T-cell (primary cell): ENCODE measurements at regions of chr6 and their contacts with region 1.

Region 1: GRCh38 chr6:157314705-157315321 is 8.5 kb downstream of the TMEM242 start:
- DNase-seq: peak in 11 of 35 experiments; percentile 4 to 76 (median 13)
- ATAC-seq: peak; percentile 79 to 96 (median 84)
- H3K4me3 ChIP-seq: no peak overlapping the region
- H3K4me3 Mint-ChIP-seq: no peak overlapping the region
- H3K27ac ChIP-seq: no peak overlapping the region
- H3K27ac Mint-ChIP-seq: peak overlapping the region in 1 of 2 donors; percentile 40
- H3K4me1 ChIP-seq: peaks cover 2% of the 10 kb centered on the region in 2 experiments
- H3K4me1 Mint-ChIP-seq: peaks cover 2 to 11% (median 6%) of the 10 kb centered on the region in 3 donors
- H3K27me3 ChIP-seq: no peaks in the 10 kb centered on the region
- H3K27me3 Mint-ChIP-seq: no peaks in the 10 kb centered on the region

Region 2: GRCh38 chr6:156866220-156867015 is 448.4 kb before region 1 on chr6:
- CTCF ChIA-PET with region 1: no interaction called
- POLR2A ChIA-PET with region 1: no interaction called
- DNase-seq: peak in 4 of 35 experiments; percentile 8 to 37 (median 29)
- ATAC-seq: peak; percentile 51 to 79 (median 62)
- H3K4me3 ChIP-seq: no peak overlapping the region
- H3K4me3 Mint-ChIP-seq: peak overlapping the region in 2 of 3 donors; percentile 7 to 36
- H3K27ac ChIP-seq: no peak overlapping the region
- H3K27ac Mint-ChIP-seq: peak overlapping the region; percentile 25 to 43
- H3K4me1 ChIP-seq: peaks cover 9 to 30% of the 10 kb centered on the region in 2 experiments
- H3K4me1 Mint-ChIP-seq: peaks cover 81 to 93% (median 89%) of the 10 kb centered on the region in 3 donors
- H3K27me3 ChIP-seq: no peaks in the 10 kb centered on the region
- H3K27me3 Mint-ChIP-seq: no peaks in the 10 kb centered on the region

Region 3: DNA sequence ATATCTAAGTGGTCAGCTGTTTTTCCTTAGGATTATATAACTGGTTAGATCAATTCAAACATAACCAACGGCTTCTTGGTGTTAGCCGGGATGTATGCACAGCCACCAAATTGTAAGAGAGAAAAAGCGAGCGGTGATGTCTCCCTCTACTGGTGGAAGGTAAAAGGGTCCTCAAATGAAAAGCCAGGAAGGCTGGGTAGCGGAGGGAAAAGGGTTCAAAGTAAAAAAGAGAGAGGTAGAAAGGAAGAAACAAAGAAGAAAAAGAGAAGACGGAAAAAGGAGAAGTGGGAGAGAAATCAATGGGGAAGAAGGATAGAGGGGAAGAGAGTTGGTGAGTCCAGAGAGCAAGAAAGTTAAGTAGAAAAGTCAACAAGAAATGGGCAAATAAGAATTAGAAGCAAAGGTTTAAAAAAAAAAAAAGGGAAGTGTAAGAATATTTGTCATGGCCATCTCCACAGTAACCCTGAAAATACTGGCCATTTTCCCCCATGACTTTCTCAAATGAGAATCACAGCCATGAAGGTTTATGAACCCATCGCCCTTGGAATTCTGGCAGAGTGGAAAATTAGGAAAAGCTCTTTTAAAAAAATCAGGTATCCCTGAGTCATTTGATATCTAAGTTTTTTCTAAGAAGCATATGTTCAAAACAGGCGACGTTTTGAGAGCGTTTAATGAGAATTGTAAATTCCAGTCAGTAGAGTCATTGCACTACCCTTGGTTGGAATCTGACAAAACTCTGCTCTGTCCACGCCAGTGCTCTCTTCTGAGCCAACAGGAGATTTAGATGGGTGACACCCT is 352.6 kb after region 1 on chr6:
- CTCF ChIA-PET with region 1: interaction called, 5 to 29 read pairs
- POLR2A ChIA-PET with region 1: interaction called in 1 of 2 experiments, 5 read pairs
- DNase-seq: peak in 32 of 35 experiments; percentile 20 to 78 (median 43)
- ATAC-seq: peak; percentile 46 to 69 (median 58)
- H3K4me3 ChIP-seq: no peak overlapping the region
- H3K4me3 Mint-ChIP-seq: no peak overlapping the region
- H3K27ac ChIP-seq: no peak overlapping the region
- H3K27ac Mint-ChIP-seq: no peak overlapping the region
- H3K4me1 ChIP-seq: peaks cover 9 to 18% of the 10 kb centered on the region in 2 experiments
- H3K4me1 Mint-ChIP-seq: peaks cover 19 to 20% (median 19%) of the 10 kb centered on the region in 3 donors
- H3K27me3 ChIP-seq: no peaks in the 10 kb centered on the region
- H3K27me3 Mint-ChIP-seq: peaks cover 0 to 4% of the 10 kb centered on the region in 2 donors

Region 4: GRCh38 chr6:158016591-158017383 is 702.0 kb after region 1 on chr6:
- CTCF ChIA-PET with region 1: interaction called in 1 of 2 experiments, 12 read pairs
- POLR2A ChIA-PET with region 1: no interaction called
- DNase-seq: no peak
- ATAC-seq: no peak
- H3K4me3 ChIP-seq: no peak overlapping the region
- H3K4me3 Mint-ChIP-seq: no peak overlapping the region
- H3K27ac ChIP-seq: no peak overlapping the region
- H3K27ac Mint-ChIP-seq: no peak overlapping the region
- H3K4me1 ChIP-seq: peaks cover 11 to 13% of the 10 kb centered on the region in 2 experiments
- H3K4me1 Mint-ChIP-seq: peaks cover 31 to 37% (median 33%) of the 10 kb centered on the region in 3 donors
- H3K27me3 ChIP-seq: no peaks in the 10 kb centered on the region
- H3K27me3 Mint-ChIP-seq: no peaks in the 10 kb centered on the region